OCI-LY7 (cell line): ENCODE measurements at regions of chr5 and their contacts with region 1.

Region 1: DNA sequence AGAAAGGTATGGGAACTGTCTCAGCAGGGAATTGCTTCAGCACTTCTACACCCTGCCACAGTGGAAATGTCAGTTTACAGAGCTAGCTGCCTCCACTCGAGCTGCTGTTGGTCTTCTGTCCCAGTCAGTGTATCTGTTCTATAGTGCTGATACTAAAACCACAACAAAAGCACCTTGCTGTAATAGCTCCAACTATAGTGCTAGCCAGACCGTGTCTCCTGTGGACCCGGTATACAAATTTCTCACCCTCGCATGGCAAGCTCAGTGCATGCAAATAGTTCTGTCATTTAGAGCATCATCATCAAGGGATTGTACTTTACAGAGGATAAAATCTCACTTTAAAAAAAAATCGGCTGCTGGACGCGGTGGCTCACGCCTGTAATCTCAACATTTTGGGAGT is 51.5 kb upstream of the IQGAP2 start:
- DNase-seq: peak; percentile 98
- H3K4me3 ChIP-seq: peak overlapping the region; percentile 53
- H3K27ac ChIP-seq: peak overlapping the region; percentile 98
- H3K4me1 ChIP-seq: peaks cover 71% of the 10 kb centered on the region
- CTCF ChIP-seq: no peak

Region 2: DNA sequence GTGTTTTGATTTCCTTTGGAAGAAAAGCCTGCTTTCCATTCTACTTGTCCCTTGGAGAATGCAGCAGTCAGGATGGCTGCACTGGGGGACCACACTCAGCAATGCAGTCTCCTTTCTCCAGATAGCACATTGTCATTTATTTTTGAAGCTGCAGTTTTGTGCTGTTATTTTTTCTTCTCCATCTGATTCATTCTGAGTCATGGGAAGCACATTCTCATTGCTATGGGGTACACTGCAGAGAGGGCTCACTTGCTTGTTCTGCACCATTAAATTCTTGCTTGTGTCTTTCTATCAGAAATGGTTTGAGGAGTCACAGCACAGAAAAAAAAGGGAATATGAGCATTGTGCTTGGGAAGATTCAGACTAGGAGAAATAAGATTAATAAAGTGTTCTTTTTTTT is 594.6 kb before region 1 on chr5:
- CTCF ChIA-PET with region 1: no interaction called
- POLR2A ChIA-PET with region 1: no interaction called
- intact Hi-C with region 1: no loop called
- DNase-seq: no peak
- H3K4me3 ChIP-seq: no peak overlapping the region
- H3K27ac ChIP-seq: no peak overlapping the region
- H3K4me1 ChIP-seq: no peaks in the 10 kb centered on the region
- CTCF ChIP-seq: no peak

Region 3: GRCh38 chr5:76062502-76063041 is 289.0 kb before region 1 on chr5:
- CTCF ChIA-PET with region 1: no interaction called
- POLR2A ChIA-PET with region 1: interaction called, 10 read pairs
- intact Hi-C with region 1: no loop called
- DNase-seq: no peak
- H3K4me3 ChIP-seq: no peak overlapping the region
- H3K27ac ChIP-seq: no peak overlapping the region
- H3K4me1 ChIP-seq: no peaks in the 10 kb centered on the region
- CTCF ChIP-seq: no peak

Region 4: GRCh38 chr5:76312783-76313182 is 38.8 kb before region 1 on chr5:
- CTCF ChIA-PET with region 1: no interaction called
- POLR2A ChIA-PET with region 1: no interaction called
- intact Hi-C with region 1: loop called (anchors 2 kb)
- DNase-seq: no peak
- H3K4me3 ChIP-seq: no peak overlapping the region
- H3K27ac ChIP-seq: no peak overlapping the region
- H3K4me1 ChIP-seq: no peaks in the 10 kb centered on the region
- CTCF ChIP-seq: no peak

Region 5: GRCh38 chr5:76337953-76338451 is 13.6 kb before region 1 on chr5:
- CTCF ChIA-PET with region 1: interaction called, 3 read pairs
- POLR2A ChIA-PET with region 1: interaction called, 25 read pairs
- intact Hi-C with region 1: no loop called
- DNase-seq: peak; percentile 74
- H3K4me3 ChIP-seq: no peak overlapping the region
- H3K27ac ChIP-seq: no peak overlapping the region
- H3K4me1 ChIP-seq: peaks cover 26% of the 10 kb centered on the region
- CTCF ChIP-seq: peak; percentile 81

Region 6: GRCh38 chr5:76366596-76366995 is 15.0 kb after region 1 on chr5:
- CTCF ChIA-PET with region 1: no interaction called
- POLR2A ChIA-PET with region 1: interaction called, 10 read pairs
- intact Hi-C with region 1: no loop called
- DNase-seq: no peak
- H3K4me3 ChIP-seq: no peak overlapping the region
- H3K27ac ChIP-seq: no peak overlapping the region
- H3K4me1 ChIP-seq: peaks cover 39% of the 10 kb centered on the region
- CTCF ChIP-seq: no peak

Region 7: GRCh38 chr5:76544268-76544926 is 192.8 kb after region 1 on chr5:
- CTCF ChIA-PET with region 1: interaction called, 5 read pairs
- POLR2A ChIA-PET with region 1: interaction called, 4 read pairs
- intact Hi-C with region 1: loop called (anchors 5 kb)
- DNase-seq: peak; percentile 61
- H3K4me3 ChIP-seq: no peak overlapping the region
- H3K27ac ChIP-seq: no peak overlapping the region
- H3K4me1 ChIP-seq: peaks cover 43% of the 10 kb centered on the region
- CTCF ChIP-seq: peak; percentile 85